Posterior vena cava (tissue), 2 donors: ENCODE measurements at regions of chr22 and their contacts with region 1.

Region 1: GRCh38 chr22:24525416-24526037 is 29.4 kb downstream of the GUCD1 start:
- DNase-seq: peak; percentile 94

Region 2: DNA sequence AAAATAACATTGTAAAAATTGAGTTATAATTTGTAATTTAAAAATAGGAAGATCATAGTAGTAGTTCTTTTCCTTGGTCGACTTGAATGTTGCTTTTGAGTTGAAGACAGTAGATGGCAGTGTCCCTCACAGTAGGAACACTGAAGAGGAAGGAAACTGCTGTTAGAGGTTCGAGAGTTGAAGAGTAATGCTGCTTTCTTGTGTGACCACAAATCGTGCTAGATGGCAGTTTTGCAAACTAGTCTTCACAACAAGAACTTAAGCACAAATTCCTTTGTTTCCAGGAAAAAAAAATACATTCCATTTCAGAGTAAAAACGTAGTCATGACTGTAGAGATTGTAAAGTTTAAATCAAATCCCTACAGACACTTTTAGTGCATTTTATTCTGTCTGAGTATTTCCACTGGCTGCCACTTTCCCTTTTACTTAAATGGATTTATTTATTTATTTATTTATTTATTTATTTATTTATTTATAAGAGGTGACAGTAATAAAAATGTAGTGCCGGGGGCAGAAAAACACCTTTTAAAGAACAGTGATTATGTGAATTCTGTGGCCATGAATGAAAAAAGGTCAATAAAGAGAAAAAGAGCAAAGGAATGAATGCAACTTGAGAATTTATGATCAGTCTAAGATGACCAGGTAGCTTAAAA is 200.3 kb before region 1 on chr22:
- intact Hi-C with region 1: loop called in 1 of 2 experiments (anchors 10 kb)
- DNase-seq: no peak

Region 3: GRCh38 chr22:24423519-24424000 is 102.0 kb before region 1 on chr22:
- intact Hi-C with region 1: loop called (anchors 5 kb)
- DNase-seq: peak; percentile 92

Region 4: GRCh38 chr22:24555157-24556039 is 29.9 kb after region 1 on chr22 and contains the start of gene SNRPD3:
- intact Hi-C with region 1: no loop called
- DNase-seq: peak; percentile 100
- total RNA-seq, gene SNRPD3: 42.5 to 54.0 TPM